ENCODE measurements at regions of chrX and their contacts with region 1.

Region 1: GRCh38 chrX:139725720-139726119 is 17.8 kb upstream of the MCF2 start:
- DNase-seq: no peak
- H3K4me3 ChIP-seq: no peak overlapping the region
- H3K27ac ChIP-seq: no peak overlapping the region
- H3K4me1 ChIP-seq: no peaks in the 10 kb centered on the region
- H3K27me3 ChIP-seq: no peaks in the 10 kb centered on the region
- CTCF ChIP-seq: no peak
- POLR2A ChIP-seq: no peak

Region 2: GRCh38 chrX:139702658-139703057 is 23.1 kb before region 1 on chrX:
- CTCF ChIA-PET with region 1: no interaction called
- POLR2A ChIA-PET with region 1: no interaction called
- dilution Hi-C with region 1: no loop called
- intact Hi-C with region 1: loop called (anchors 1 kb)
- DNase-seq: no peak
- H3K4me3 ChIP-seq: no peak overlapping the region
- H3K27ac ChIP-seq: no peak overlapping the region
- H3K4me1 ChIP-seq: no peaks in the 10 kb centered on the region
- H3K27me3 ChIP-seq: no peaks in the 10 kb centered on the region
- CTCF ChIP-seq: no peak
- POLR2A ChIP-seq: no peak

Region 3: GRCh38 chrX:139784807-139785206 is 59.1 kb after region 1 on chrX:
- CTCF ChIA-PET with region 1: no interaction called
- POLR2A ChIA-PET with region 1: no interaction called
- dilution Hi-C with region 1: no loop called
- intact Hi-C with region 1: no loop called
- DNase-seq: no peak
- H3K4me3 ChIP-seq: no peak overlapping the region
- H3K27ac ChIP-seq: no peak overlapping the region
- H3K4me1 ChIP-seq: no peaks in the 10 kb centered on the region
- H3K27me3 ChIP-seq: no peaks in the 10 kb centered on the region
- CTCF ChIP-seq: no peak
- POLR2A ChIP-seq: no peak